Ovary (tissue), 10 donors: ENCODE measurements at regions of chr14 and their contacts with region 1.

Region 1: GRCh38 chr14:95488376-95489213 is 27.9 kb downstream of the SYNE3 start:
- DNase-seq: no peak
- H3K4me3 ChIP-seq: no peak overlapping the region
- H3K27ac ChIP-seq: peak overlapping the region; percentile 34 to 58
- H3K4me1 ChIP-seq: peaks cover 30% of the 10 kb centered on the region
- H3K27me3 ChIP-seq: no peaks in the 10 kb centered on the region
- CTCF ChIP-seq: no peak
- EP300 ChIP-seq: no peak
- POLR2A ChIP-seq: no peak

Region 2: DNA sequence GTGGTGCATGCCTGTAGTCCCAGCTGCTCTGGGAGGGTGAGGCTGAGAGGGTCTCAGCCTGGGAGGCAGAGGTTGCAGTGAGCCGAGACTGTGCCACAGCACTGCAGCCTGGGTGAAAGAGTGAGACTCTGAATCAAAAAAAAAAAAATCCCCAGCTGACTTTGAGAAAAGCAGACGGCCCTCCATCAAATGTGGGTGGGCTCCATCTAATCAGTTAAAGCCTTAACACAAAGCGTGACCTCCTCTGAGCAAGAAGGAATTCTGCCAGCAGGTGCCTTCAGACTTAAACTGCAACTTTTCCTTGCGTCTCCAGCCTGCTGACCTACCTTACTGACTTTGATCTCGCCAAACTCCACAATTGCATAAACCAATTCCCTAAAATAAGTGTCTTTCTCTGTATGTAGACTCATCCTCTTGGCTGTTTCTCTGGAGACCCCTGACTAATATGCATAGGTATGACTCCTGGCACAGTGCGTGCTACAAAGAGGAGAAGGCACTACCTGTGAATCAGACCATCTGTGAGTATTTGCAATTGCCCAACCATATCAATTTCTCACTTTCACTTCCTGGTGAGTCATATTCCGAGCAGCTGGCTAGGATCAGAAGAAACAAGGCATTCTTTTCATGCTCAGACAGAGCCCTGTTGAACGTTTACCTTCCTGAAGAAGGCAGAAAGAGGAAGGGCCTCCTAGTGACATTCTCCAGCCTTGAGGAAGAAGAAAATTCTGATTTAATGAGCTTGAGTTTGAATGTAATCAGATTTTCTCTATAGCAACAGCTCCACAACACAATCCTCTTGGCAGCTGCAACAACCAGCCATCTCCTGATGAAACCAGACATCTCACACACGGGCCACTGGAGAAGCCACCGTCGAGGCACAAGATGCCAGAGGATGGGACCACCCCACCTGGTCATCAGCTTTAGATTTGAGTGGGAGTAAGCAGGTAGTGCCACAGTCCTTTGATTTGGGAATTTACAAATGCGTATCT is 223.2 kb before region 1 on chr14:
- intact Hi-C with region 1: no loop called
- DNase-seq: no peak
- H3K4me3 ChIP-seq: no peak overlapping the region
- H3K27ac ChIP-seq: no peak overlapping the region
- H3K4me1 ChIP-seq: peaks cover 2% of the 10 kb centered on the region
- H3K27me3 ChIP-seq: no peaks in the 10 kb centered on the region
- CTCF ChIP-seq: no peak
- EP300 ChIP-seq: no peak
- POLR2A ChIP-seq: no peak

Region 3: GRCh38 chr14:95424529-95424928 is 64.1 kb before region 1 on chr14:
- intact Hi-C with region 1: no loop called
- DNase-seq: peak in 2 of 5 donors; percentile 32 to 56
- H3K4me3 ChIP-seq: no peak overlapping the region
- H3K27ac ChIP-seq: no peak overlapping the region
- H3K4me1 ChIP-seq: peaks cover 5% of the 10 kb centered on the region
- H3K27me3 ChIP-seq: no peaks in the 10 kb centered on the region
- CTCF ChIP-seq: no peak
- EP300 ChIP-seq: no peak
- POLR2A ChIP-seq: no peak

Region 4: GRCh38 chr14:95519699-95520098 is 31.1 kb after region 1 on chr14:
- intact Hi-C with region 1: loop called in 1 of 4 experiments (anchors 5 kb)
- DNase-seq: peak in 4 of 5 donors; percentile 58 to 84 (median 62)
- H3K4me3 ChIP-seq: no peak overlapping the region
- H3K27ac ChIP-seq: no peak overlapping the region
- H3K4me1 ChIP-seq: peaks cover 36% of the 10 kb centered on the region
- H3K27me3 ChIP-seq: no peaks in the 10 kb centered on the region
- CTCF ChIP-seq: no peak
- EP300 ChIP-seq: no peak
- POLR2A ChIP-seq: no peak